ENCODE measurements at regions of chr9 and their contacts with region 1.

Region 1: DNA sequence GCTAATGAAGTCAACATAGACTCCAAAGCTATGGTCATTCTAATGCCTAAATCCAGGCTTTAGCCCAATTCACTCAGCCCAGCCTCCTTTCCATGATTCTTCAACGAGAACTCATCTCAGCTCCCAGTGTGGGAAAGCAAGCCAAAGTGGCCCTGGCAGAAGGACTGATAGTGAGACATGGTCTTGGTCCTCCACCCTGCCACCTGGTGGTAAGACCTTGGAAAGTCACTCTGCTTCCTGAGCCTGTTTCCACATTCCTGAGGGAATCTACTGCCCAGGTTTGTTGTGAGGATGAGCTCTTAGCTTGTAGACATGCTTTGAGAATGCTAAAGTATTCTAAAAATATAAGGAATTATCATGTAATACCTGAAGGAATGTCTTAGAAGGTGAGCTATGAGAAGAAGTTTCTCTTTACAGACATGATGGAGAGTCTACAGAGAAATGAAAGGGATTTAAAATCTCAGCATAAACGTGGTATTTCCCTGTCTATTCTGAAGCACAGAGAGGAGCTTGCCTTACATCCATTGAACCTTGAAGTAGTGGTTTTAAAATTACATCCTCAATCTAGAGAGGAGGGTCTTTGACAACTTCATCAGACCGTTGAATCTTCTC is 173.5 kb downstream of the TRIM32 start:
- DNase-seq: peak in 1 of 2 experiments; percentile 88
- H3K4me3 ChIP-seq: no peak overlapping the region
- H3K27ac ChIP-seq: no peak overlapping the region
- H3K4me1 ChIP-seq: peaks cover 0 to 4% (median 0%) of the 10 kb centered on the region in 4 experiments; a peak in 2 of 7 replicates
- H3K27me3 ChIP-seq: no peaks in the 10 kb centered on the region
- CTCF ChIP-seq: peak; percentile 82 to 95 (median 87)
- EP300 ChIP-seq: no peak
- POLR2A ChIP-seq: no peak
- RAD21 ChIP-seq: peak; percentile 84 to 90

Region 2: DNA sequence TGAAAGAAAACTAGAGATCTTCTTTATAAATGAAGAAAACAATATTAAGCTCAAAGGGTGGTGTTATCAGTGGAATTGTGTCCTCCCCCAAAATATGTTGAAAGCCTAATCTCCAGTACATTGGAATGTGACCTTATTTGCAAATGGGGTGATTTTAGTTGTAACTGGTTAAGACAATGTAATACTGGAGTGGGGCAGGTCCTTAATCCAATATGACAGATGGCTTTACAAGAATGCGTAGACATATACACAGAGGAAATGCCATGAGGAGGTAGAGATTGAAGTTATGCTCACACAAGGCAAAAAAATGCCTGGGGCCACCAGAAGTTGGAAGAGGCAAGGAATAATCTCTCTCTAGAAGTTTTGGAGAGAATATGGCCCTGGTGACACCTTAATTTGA is 187.2 kb before region 1 on chr9:
- CTCF ChIA-PET with region 1: no interaction called
- POLR2A ChIA-PET with region 1: no interaction called
- DNase-seq: no peak
- H3K4me3 ChIP-seq: no peak overlapping the region
- H3K27ac ChIP-seq: no peak overlapping the region
- H3K4me1 ChIP-seq: no peaks in the 10 kb centered on the region
- H3K27me3 ChIP-seq: no peaks in the 10 kb centered on the region
- CTCF ChIP-seq: no peak
- EP300 ChIP-seq: no peak
- POLR2A ChIP-seq: no peak
- RAD21 ChIP-seq: no peak

Region 3: DNA sequence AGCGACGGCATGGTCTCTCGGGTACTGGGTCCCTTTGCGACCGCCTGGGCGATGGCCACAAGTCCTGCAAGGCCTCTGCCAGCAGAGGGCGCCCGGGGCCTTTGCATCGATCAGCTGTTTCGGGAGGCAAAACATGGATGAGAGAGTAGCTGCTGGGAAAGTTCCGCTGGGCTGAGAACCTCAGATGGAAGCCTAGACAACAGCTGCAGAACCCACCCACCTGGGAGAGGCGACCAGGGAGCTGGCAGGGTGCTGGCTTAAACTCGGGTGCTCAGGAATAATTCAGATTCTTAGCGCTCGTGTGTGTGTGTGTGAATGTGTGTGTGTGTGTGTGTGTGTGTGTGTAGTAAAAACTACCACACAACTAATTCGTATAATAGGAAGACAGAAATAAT is 123.5 kb before region 1 on chr9:
- CTCF ChIA-PET with region 1: interaction called, 308 read pairs
- POLR2A ChIA-PET with region 1: interaction called, 3 read pairs
- DNase-seq: peak; percentile 75 to 98
- H3K4me3 ChIP-seq: no peak overlapping the region
- H3K27ac ChIP-seq: no peak overlapping the region
- H3K4me1 ChIP-seq: peaks cover 0 to 9% (median 5%) of the 10 kb centered on the region in 4 experiments; a peak in 2 of 7 replicates
- H3K27me3 ChIP-seq: no peaks in the 10 kb centered on the region; a peak in 1 of 7 replicates
- CTCF ChIP-seq: peak; percentile 86 to 98 (median 97)
- EP300 ChIP-seq: no peak
- POLR2A ChIP-seq: no peak
- RAD21 ChIP-seq: peak; percentile 100

Region 4: GRCh38 chr9:116806075-116806474 is 54.5 kb before region 1 on chr9:
- CTCF ChIA-PET with region 1: interaction called, 10 read pairs
- POLR2A ChIA-PET with region 1: no interaction called
- DNase-seq: peak in 1 of 2 experiments; percentile 55
- H3K4me3 ChIP-seq: no peak overlapping the region
- H3K27ac ChIP-seq: no peak overlapping the region
- H3K4me1 ChIP-seq: peaks cover 0 to 2% (median under 1%) of the 10 kb centered on the region in 4 experiments; a peak in 2 of 7 replicates
- H3K27me3 ChIP-seq: no peaks in the 10 kb centered on the region
- CTCF ChIP-seq: no peak
- EP300 ChIP-seq: no peak
- POLR2A ChIP-seq: no peak
- RAD21 ChIP-seq: no peak

Region 5: DNA sequence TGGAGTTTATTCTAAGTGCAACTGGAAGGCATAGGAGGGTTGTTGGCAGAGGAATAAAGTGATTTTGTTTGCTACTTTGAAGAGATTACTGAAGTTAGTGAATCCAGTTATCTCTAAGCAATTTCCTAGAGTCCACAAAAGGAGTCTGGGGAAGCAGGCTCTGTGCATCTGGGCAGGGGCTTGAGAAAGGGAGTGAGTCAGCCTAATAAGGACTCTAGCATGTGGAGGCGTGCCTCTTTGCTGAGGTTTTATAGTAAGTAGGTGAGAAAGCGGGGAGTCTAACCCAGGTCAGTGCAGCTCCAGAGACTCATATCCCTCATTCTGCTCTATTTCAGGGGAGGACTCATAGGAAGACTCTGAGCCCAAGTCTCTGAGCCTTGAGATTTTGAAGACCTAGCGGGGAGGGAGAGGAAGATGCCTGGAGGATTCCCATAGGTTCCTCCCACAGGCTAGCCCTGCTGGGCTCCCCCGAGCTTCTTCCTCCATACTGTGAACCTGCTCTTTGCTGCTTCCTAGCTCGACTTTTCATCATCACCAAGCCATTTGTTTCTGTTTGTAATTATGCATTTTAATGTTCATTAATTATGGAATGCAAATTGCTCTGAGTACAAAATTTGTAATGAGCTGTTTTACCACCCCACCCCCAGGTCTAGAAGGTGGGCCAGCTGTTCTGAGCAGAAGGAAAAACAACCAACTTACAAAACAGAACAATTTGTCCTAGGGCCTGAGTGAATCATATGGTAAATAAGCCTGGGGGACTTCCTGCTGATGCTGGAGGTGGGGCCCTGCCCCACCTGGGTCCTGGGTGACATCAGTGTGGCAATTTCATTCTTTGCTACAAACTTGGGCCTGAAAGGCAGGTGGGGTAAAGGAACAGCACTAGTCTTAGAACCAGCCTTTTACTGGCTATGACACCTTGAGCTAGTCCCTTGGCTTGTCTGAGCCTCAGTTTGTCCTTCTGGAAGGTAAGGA is 23.3 kb before region 1 on chr9:
- CTCF ChIA-PET with region 1: interaction called, 35 read pairs
- POLR2A ChIA-PET with region 1: no interaction called
- DNase-seq: no peak
- H3K4me3 ChIP-seq: no peak overlapping the region
- H3K27ac ChIP-seq: no peak overlapping the region; the same call in 1 of the 2 replicates
- H3K4me1 ChIP-seq: peaks cover 8 to 24% (median 15%) of the 10 kb centered on the region in 4 experiments; a peak in 6 of 7 replicates
- H3K27me3 ChIP-seq: no peaks in the 10 kb centered on the region
- CTCF ChIP-seq: no peak
- EP300 ChIP-seq: no peak
- POLR2A ChIP-seq: no peak
- RAD21 ChIP-seq: no peak

Region 6: DNA sequence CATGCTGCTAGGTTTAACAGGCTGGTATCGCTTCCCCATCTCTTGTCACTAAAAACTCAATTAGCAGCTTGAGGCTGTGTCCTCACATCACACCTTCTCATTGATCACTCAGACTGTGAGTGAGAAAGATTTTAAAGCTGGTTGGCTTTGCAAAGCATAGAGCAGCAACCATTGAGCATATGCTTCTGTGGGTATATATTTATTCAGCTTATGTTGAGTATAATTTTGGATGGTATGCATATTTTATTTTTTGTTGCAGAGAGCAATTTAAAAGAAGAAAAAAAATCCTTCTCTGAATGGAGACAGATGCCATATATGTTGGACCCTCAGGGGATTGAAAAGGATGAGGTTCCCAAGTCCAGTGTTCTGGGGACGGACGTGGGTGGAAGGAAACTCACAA is 10.9 kb before region 1 on chr9:
- CTCF ChIA-PET with region 1: interaction called, 37 read pairs
- POLR2A ChIA-PET with region 1: no interaction called
- DNase-seq: no peak
- H3K4me3 ChIP-seq: no peak overlapping the region
- H3K27ac ChIP-seq: no peak overlapping the region
- H3K4me1 ChIP-seq: no peaks in the 10 kb centered on the region
- H3K27me3 ChIP-seq: no peaks in the 10 kb centered on the region
- CTCF ChIP-seq: no peak
- EP300 ChIP-seq: no peak
- POLR2A ChIP-seq: no peak
- RAD21 ChIP-seq: no peak

Region 7: GRCh38 chr9:116928884-116929283 is 68.3 kb after region 1 on chr9:
- CTCF ChIA-PET with region 1: interaction called, 21 read pairs
- POLR2A ChIA-PET with region 1: interaction called, 3 read pairs
- DNase-seq: peak; percentile 52 to 71
- H3K4me3 ChIP-seq: peak overlapping the region in 1 of 4 experiments; percentile 22; a peak in 1 of 8 replicates
- H3K27ac ChIP-seq: peak overlapping the region; percentile 77
- H3K4me1 ChIP-seq: peaks cover 14 to 32% (median 22%) of the 10 kb centered on the region in 4 experiments
- H3K27me3 ChIP-seq: no peaks in the 10 kb centered on the region
- CTCF ChIP-seq: no peak
- EP300 ChIP-seq: peak in 1 of 2 experiments; percentile 95; a peak in 2 of 3 replicates
- POLR2A ChIP-seq: peak in 1 of 2 experiments; percentile 51; a peak in 1 of 3 replicates
- RAD21 ChIP-seq: peak in 1 of 2 experiments; percentile 20; a peak in 1 of 4 replicates

Measured in H1 (cell line).